Heart left ventricle (tissue), 16 donors: ENCODE measurements at regions of chr10 and their contacts with region 1.

Region 1: DNA sequence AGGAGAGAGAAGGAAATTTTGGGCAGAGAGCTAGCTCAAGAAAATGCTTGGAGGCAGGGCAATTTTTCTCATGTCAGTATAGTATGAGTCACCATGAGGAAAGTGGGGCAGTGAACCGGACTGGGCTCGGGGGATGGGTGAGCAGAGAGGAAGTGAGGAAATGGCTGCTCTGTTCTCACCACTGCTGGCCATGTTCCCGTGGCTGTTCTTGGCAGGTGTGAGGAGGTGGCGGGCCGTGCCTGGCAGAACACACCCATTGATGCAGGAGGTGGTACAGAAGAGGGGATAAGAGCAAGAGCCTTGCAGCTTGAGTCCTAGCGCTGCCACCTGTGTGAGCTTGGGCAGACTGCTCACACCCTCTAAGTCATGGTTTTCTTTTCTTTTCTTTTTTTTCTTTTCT is 304.4 kb upstream of the LYZL1 start:
- DNase-seq: peak; percentile 75 to 94 (median 90)
- ATAC-seq: peak; percentile 95 to 98 (median 98)
- H3K4me3 ChIP-seq: no peak overlapping the region
- H3K27ac ChIP-seq: peak overlapping the region in 3 of 12 donors; percentile 32 to 56 (median 36)
- H3K4me1 ChIP-seq: peaks cover 0 to 21% (median 14%) of the 10 kb centered on the region in 12 donors
- H3K27me3 ChIP-seq: no peaks in the 10 kb centered on the region
- CTCF ChIP-seq: no peak
- POLR2A ChIP-seq: no peak

Region 2: DNA sequence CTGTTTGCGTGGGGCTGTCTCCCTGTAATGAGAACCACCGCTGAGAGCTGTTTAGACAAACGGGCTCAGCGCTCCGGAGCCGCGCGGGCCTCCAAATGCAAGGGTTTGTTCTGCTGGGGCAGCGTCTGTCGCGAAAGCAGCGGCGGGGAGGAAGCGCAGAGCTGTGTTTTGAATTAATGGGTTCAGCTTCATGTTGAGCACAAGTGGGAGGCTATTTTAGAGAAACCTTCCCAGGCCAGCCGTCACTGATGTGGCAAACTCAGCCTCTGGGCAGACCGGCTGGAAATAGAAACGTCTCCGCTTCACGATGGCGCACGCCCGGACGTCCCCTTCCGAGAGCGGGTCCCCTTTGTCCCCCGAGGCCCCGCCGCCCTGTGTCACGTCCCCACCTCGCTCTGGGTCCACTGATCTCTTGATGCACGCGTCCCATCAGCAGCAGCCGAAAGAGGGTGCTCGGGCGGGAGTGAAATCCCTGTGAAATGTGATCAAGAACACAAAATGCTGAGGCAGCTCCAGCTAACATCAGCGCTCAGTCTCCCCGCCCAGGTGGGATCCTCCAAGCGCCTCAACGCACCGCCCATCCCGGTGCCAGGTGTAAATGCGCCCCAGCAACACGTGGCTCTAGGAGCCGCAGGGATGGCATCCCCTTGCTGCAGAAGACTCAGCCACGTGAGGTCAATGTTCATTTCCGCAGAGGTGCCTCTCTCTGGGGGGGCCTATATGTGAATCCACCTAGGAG is 262.2 kb before region 1 on chr10:
- intact Hi-C with region 1: no loop called
- DNase-seq: peak; percentile 21 to 65 (median 28)
- ATAC-seq: peak; percentile 47 to 85 (median 78)
- H3K4me3 ChIP-seq: peak overlapping the region in 11 of 12 donors; percentile 15 to 64 (median 51)
- H3K27ac ChIP-seq: peak overlapping the region in 8 of 12 donors; percentile 2 to 77 (median 58)
- H3K4me1 ChIP-seq: peaks cover 0 to 16% (median 2%) of the 10 kb centered on the region in 12 donors
- H3K27me3 ChIP-seq: peaks cover 0 to 17% (median 0%) of the 10 kb centered on the region in 9 donors
- CTCF ChIP-seq: peak in 1 of 12 donors; percentile 13
- POLR2A ChIP-seq: no peak

Region 3: GRCh38 chr10:28839600-28840007 is 144.8 kb before region 1 on chr10:
- intact Hi-C with region 1: loop called in 2 of 10 experiments (anchors 2 to 10 kb)
- DNase-seq: peak in 4 of 5 donors; percentile 57 to 70 (median 58)
- ATAC-seq: peak; percentile 85 to 96 (median 94)
- H3K4me3 ChIP-seq: peak overlapping the region in 1 of 12 donors; percentile 0
- H3K27ac ChIP-seq: peak overlapping the region; percentile 4 to 88 (median 66)
- H3K4me1 ChIP-seq: peaks cover 0 to 40% (median 15%) of the 10 kb centered on the region in 12 donors
- H3K27me3 ChIP-seq: no peaks in the 10 kb centered on the region
- CTCF ChIP-seq: no peak
- POLR2A ChIP-seq: no peak

Region 4: GRCh38 chr10:28892816-28893547 is 91.4 kb before region 1 on chr10:
- intact Hi-C with region 1: loop called in 2 of 10 experiments (anchors 5 kb)
- DNase-seq: no peak
- ATAC-seq: no peak
- H3K4me3 ChIP-seq: no peak overlapping the region
- H3K27ac ChIP-seq: no peak overlapping the region
- H3K4me1 ChIP-seq: peaks cover 0 to 7% (median 0%) of the 10 kb centered on the region in 12 donors
- H3K27me3 ChIP-seq: no peaks in the 10 kb centered on the region
- CTCF ChIP-seq: no peak
- POLR2A ChIP-seq: no peak